ENCODE measurements at regions of chr17 and their contacts with region 1.

Region 1: DNA sequence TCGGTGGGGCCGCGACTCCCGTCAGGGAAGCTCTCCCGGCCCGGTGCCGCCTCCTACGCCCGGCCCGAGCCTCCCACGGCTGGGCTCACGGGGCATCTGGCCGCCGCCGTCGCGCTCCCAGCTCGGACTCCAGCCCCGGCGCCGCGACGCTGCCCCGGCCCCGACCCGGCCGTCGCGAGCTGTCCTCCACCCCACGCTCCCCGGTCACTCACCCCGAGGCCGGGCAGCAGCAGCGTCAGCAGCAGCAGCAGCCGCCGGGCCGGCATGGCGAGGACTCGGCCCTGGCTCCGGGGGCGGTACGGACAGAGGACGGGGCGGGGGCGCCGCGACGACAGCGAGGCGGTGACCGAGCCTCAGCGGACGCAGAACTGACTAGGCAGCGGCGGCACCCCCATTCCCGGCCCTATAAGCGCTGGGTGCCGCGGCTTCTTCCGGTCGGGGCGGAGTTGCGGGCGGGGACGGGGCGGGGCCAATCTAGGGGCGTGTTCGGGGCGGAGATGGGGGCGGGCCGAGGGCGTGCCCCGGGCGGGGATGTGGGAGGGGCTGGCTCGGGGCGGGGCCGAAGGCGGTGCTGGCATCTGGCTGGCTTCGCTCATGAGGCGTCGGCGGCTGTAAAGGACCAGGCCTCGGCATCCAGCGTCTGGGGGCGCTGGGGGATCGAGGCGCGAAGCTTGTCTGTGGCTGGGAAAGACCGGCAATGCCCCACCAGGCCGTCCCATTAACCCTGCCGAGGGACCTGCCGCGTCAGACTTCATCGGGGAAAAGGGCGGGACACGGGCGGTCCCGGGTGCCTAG is at the start of gene ERN1:
- DNase-seq: peak; percentile 97
- H3K4me3 ChIP-seq: peak within 1 kb of the TSS; percentile 52 to 92 (median 79)
- H3K27ac ChIP-seq: peak within 1 kb of the TSS; percentile 96 to 99 (median 98)
- H3K4me1 ChIP-seq: peaks cover 0 to 32% (median 20%) of the 10 kb centered on the region in 4 donors
- H3K27me3 ChIP-seq: no peaks in the 10 kb centered on the region
- CTCF ChIP-seq: no peak
- EP300 ChIP-seq: no peak
- POLR2A ChIP-seq: peak; percentile 34 to 60
- total RNA-seq, gene ERN1: 7.1 to 9.4 (median 8.2) TPM

Region 2: DNA sequence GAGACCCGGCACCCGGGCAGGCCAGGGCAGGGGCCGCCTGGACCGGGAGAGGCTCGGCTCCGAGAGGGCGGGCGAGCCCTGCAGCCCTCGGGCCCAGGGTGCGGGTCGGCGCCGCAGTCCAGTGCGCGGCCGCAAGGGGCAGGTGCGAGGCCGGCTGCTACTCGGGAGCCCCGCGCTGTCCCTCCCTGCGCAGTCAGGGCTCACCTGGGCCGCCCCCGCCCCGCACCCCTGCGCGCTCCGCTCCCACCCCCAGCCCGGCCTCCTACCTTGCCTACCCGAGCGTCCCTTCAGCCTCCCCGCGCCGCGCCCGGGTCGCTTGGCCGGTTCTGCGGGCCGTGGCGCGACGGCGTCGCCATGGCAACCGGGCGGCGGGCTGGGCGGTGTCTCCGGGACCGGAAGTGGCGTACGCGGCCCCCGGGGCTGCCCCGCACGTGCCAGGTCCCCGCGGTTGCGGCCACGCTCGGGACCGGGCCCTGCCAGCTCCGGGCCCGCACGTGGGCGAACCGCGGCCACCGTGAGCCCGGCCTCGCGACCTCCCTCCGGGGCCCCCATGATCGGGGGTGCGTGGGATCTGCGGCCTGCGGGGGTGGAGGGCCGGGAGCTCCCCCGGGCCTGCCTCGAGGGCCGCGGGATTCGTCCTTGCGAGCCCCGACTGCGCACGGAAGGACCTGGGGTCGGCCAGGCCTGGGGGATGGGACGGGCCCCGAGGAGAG is 683.8 kb before region 1 on chr17 and contains the start of gene CYB561:
- intact Hi-C with region 1: loop called (anchors 5 kb)
- DNase-seq: peak; percentile 89
- H3K4me3 ChIP-seq: peak within 1 kb of the TSS; percentile 41 to 71 (median 63)
- H3K27ac ChIP-seq: peak within 1 kb of the TSS; percentile 67 to 80 (median 74)
- H3K4me1 ChIP-seq: peaks cover 0 to 28% (median 18%) of the 10 kb centered on the region in 4 donors
- H3K27me3 ChIP-seq: no peaks in the 10 kb centered on the region
- CTCF ChIP-seq: peak in 3 of 4 experiments; percentile 17 to 52 (median 41)
- EP300 ChIP-seq: no peak
- POLR2A ChIP-seq: no peak
- total RNA-seq, gene CYB561: 6.3 to 16.4 (median 12.9) TPM

Region 3: GRCh38 chr17:63943745-63944144 is 186.2 kb before region 1 on chr17:
- intact Hi-C with region 1: no loop called
- DNase-seq: no peak
- H3K4me3 ChIP-seq: no peak overlapping the region
- H3K27ac ChIP-seq: no peak overlapping the region
- H3K4me1 ChIP-seq: no peaks in the 10 kb centered on the region
- H3K27me3 ChIP-seq: no peaks in the 10 kb centered on the region
- CTCF ChIP-seq: no peak
- EP300 ChIP-seq: no peak
- POLR2A ChIP-seq: no peak

Region 4: GRCh38 chr17:64020056-64020766 is 109.8 kb before region 1 on chr17 and contains the start of gene ICAM2:
- intact Hi-C with region 1: no loop called
- DNase-seq: peak; percentile 79
- H3K4me3 ChIP-seq: peak within 1 kb of the TSS; percentile 8 to 46 (median 36)
- H3K27ac ChIP-seq: peak within 1 kb of the TSS; percentile 49 to 68 (median 62)
- H3K4me1 ChIP-seq: peaks cover 0 to under 1% (median 0%) of the 10 kb centered on the region in 4 donors
- H3K27me3 ChIP-seq: no peaks in the 10 kb centered on the region
- CTCF ChIP-seq: no peak
- EP300 ChIP-seq: no peak
- POLR2A ChIP-seq: peak in 1 of 2 donors; percentile 7
- total RNA-seq, gene ICAM2: 27.4 to 59.5 (median 29.9) TPM

Region 5: GRCh38 chr17:64063766-64064224 is 66.2 kb before region 1 on chr17:
- intact Hi-C with region 1: loop called (anchors 2 kb)
- DNase-seq: peak; percentile 74
- H3K4me3 ChIP-seq: no peak overlapping the region
- H3K27ac ChIP-seq: no peak overlapping the region
- H3K4me1 ChIP-seq: no peaks in the 10 kb centered on the region
- H3K27me3 ChIP-seq: no peaks in the 10 kb centered on the region
- CTCF ChIP-seq: peak in 3 of 4 experiments; percentile 23 to 49 (median 29)
- EP300 ChIP-seq: no peak
- POLR2A ChIP-seq: no peak

Region 6: GRCh38 chr17:64103391-64104364 is 26.3 kb before region 1 on chr17:
- intact Hi-C with region 1: no loop called
- DNase-seq: no peak
- H3K4me3 ChIP-seq: no peak overlapping the region
- H3K27ac ChIP-seq: no peak overlapping the region
- H3K4me1 ChIP-seq: peaks cover 0 to 9% (median 2%) of the 10 kb centered on the region in 4 donors
- H3K27me3 ChIP-seq: no peaks in the 10 kb centered on the region
- CTCF ChIP-seq: no peak
- EP300 ChIP-seq: no peak
- POLR2A ChIP-seq: no peak

Region 7: GRCh38 chr17:64357191-64357981 is 227.4 kb after region 1 on chr17:
- intact Hi-C with region 1: no loop called
- DNase-seq: peak; percentile 91
- H3K4me3 ChIP-seq: no peak overlapping the region
- H3K27ac ChIP-seq: peak overlapping the region in 2 of 4 donors; percentile 33 to 64
- H3K4me1 ChIP-seq: no peaks in the 10 kb centered on the region
- H3K27me3 ChIP-seq: no peaks in the 10 kb centered on the region
- CTCF ChIP-seq: no peak
- EP300 ChIP-seq: no peak
- POLR2A ChIP-seq: no peak

Measured in sigmoid colon (tissue), 7 donors.